ENCODE measurements at regions of chr14 and their contacts with region 1.

Region 1: GRCh38 chr14:104137297-104138097 is 890 bp upstream of the KIF26A start:
- DNase-seq: peak; percentile 79
- ATAC-seq: peak; percentile 42
- H3K4me3 Mint-ChIP-seq: peak overlapping the region; percentile 71
- H3K27ac Mint-ChIP-seq: no peak overlapping the region
- H3K4me1 Mint-ChIP-seq: peaks cover 25% of the 10 kb centered on the region
- H3K27me3 Mint-ChIP-seq: peaks cover 28% of the 10 kb centered on the region
- CTCF ChIP-seq: peak; percentile 82

Region 2: GRCh38 chr14:103688906-103689902 is 448.3 kb before region 1 on chr14:
- CTCF ChIA-PET with region 1: no interaction called
- POLR2A ChIA-PET with region 1: no interaction called
- DNase-seq: no peak
- ATAC-seq: no peak
- H3K4me3 Mint-ChIP-seq: no peak overlapping the region
- H3K27ac Mint-ChIP-seq: peak overlapping the region; percentile 89
- H3K4me1 Mint-ChIP-seq: no peaks in the 10 kb centered on the region; the same call in 1 of the 2 replicates
- H3K27me3 Mint-ChIP-seq: no peaks in the 10 kb centered on the region
- CTCF ChIP-seq: no peak

Region 3: DNA sequence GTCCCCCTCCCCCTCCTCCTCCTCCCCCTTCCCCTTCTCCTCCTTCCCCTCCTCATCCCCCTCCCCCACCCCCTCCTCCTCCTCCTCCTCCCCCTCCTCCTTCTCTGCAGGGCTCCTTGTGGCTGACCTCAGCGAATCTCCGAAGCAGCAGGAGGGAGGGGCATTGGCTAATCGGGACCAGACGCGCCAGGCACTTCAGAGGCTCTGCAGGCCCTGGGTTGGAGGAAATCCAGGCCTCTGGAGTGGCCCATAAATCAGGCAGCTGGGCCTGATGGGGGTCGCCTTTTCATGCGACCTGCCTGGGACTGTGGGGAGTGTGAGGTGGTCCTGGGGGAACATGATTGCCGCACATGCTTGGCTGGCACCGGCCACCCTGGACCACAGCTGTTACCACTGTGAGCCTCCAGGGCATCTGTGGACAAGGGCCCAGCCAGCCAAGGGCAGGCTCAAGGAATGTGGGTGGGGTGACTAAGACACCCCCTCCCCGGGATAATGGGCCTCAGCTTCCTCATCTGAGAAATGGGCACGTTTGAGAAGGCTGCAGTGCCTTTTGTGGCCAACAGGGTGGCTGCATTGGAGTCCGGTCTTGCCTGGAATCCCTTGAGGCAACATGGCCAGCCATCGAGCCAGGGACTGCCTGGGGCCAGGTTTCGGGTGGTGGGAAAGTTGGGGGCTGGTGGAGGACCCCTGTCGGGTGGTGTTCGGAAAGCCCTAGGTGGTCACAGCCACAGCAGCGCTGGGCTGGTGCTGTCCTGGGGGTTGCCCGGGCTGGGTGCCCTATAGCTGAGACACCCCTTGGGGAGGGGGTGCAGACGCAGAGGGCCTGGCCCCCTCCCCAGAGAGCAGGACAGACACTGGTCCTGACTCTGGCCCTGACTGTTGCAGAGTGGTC is 12.9 kb after region 1 on chr14:
- CTCF ChIA-PET with region 1: interaction called, 16 read pairs
- POLR2A ChIA-PET with region 1: no interaction called
- DNase-seq: peak; percentile 71
- ATAC-seq: peak; percentile 43
- H3K4me3 Mint-ChIP-seq: no peak overlapping the region
- H3K27ac Mint-ChIP-seq: peak overlapping the region; percentile 84; the same call in 1 of the 2 replicates
- H3K4me1 Mint-ChIP-seq: peaks cover 35% of the 10 kb centered on the region
- H3K27me3 Mint-ChIP-seq: no peaks in the 10 kb centered on the region
- CTCF ChIP-seq: peak; percentile 57; the same call in 1 of the 2 replicates

Region 4: DNA sequence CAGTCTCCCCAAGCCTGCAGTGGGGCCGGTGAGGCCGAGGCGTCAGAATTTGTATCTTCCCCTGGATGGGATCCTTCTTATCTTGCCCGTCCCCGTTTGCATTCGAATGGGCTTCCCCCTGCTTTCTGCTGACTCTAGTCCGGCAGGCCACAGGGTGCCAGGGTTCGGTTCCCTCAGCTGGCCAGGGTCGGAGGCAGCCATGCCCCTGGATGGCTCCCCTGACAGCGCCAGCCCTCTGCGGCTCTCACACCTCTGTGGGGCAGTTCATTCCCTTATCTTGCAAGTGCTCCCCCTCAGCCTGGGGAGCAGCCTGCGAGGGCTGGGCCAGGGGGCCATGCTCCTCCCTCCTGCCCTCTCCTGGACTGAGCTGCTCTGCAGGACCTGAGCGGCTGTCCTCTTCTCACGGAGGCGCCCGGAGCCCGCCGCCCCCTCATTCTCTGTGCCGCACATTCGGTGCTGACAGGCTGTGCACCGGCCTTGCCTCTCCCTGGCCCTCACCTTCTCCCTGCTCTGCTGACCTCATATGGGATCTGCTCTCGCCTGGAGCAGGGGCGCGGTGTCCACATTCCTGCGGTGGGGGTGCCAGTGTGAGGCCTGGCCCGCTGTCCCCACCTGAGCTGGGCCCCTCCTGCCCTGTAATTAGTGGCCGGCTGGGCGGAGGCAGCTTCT is 33.7 kb after region 1 on chr14:
- CTCF ChIA-PET with region 1: interaction called, 11 read pairs
- POLR2A ChIA-PET with region 1: no interaction called
- DNase-seq: peak; percentile 79
- ATAC-seq: peak; percentile 71
- H3K4me3 Mint-ChIP-seq: peak overlapping the region; percentile 47
- H3K27ac Mint-ChIP-seq: peak overlapping the region; percentile 89
- H3K4me1 Mint-ChIP-seq: peaks cover 26% of the 10 kb centered on the region
- H3K27me3 Mint-ChIP-seq: no peaks in the 10 kb centered on the region
- CTCF ChIP-seq: no peak

Region 5: DNA sequence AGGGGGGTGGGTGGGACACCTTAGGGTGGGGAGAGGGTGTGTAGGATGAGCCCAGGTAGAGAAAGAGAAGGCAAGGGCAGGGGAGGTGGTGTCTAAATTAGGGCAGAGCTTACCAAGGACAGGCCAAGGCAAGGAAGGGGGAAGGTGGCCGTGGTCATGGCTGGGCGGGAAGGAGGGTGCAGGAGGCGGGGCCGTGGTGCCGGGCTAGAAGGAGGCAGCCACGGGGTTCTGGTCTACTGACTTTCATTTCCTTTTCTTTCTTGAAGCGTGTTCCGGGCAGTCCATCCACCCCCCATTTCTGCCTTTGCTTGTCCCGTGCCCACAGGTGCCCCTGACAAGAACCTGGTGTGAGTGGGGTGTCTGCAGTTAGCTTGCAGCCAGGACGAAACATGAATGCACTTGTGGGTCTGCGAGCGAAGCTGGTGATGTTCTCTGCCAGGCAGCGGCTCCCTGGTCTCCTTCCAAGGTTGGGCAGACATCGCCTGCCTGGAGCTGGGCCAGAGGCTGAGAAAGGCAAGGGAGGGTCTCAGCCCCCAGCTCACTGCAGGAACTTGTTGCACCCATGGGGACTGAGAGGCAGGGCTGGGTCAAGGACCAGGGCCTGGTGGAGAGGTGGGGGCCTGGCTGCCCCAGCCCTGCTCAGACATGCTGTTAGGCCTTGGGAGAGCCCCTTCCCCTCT is 59.1 kb after region 1 on chr14:
- CTCF ChIA-PET with region 1: interaction called, 10 read pairs
- POLR2A ChIA-PET with region 1: no interaction called
- DNase-seq: no peak
- ATAC-seq: no peak
- H3K4me3 Mint-ChIP-seq: no peak overlapping the region
- H3K27ac Mint-ChIP-seq: no peak overlapping the region
- H3K4me1 Mint-ChIP-seq: peaks cover 5% of the 10 kb centered on the region; the same call in 1 of the 2 replicates
- H3K27me3 Mint-ChIP-seq: no peaks in the 10 kb centered on the region
- CTCF ChIP-seq: no peak

Region 6: GRCh38 chr14:104224506-104225277 is 87.2 kb after region 1 on chr14:
- CTCF ChIA-PET with region 1: interaction called, 18 read pairs
- POLR2A ChIA-PET with region 1: no interaction called
- DNase-seq: peak; percentile 77
- ATAC-seq: peak; percentile 42
- H3K4me3 Mint-ChIP-seq: no peak overlapping the region
- H3K27ac Mint-ChIP-seq: peak overlapping the region; percentile 94
- H3K4me1 Mint-ChIP-seq: peaks cover 25% of the 10 kb centered on the region
- H3K27me3 Mint-ChIP-seq: no peaks in the 10 kb centered on the region
- CTCF ChIP-seq: peak; percentile 49

Region 7: GRCh38 chr14:104322531-104323366 is 185.3 kb after region 1 on chr14:
- CTCF ChIA-PET with region 1: no interaction called
- POLR2A ChIA-PET with region 1: no interaction called
- DNase-seq: no peak
- ATAC-seq: no peak
- H3K4me3 Mint-ChIP-seq: no peak overlapping the region
- H3K27ac Mint-ChIP-seq: no peak overlapping the region
- H3K4me1 Mint-ChIP-seq: no peaks in the 10 kb centered on the region
- H3K27me3 Mint-ChIP-seq: no peaks in the 10 kb centered on the region
- CTCF ChIP-seq: no peak

Region 8: DNA sequence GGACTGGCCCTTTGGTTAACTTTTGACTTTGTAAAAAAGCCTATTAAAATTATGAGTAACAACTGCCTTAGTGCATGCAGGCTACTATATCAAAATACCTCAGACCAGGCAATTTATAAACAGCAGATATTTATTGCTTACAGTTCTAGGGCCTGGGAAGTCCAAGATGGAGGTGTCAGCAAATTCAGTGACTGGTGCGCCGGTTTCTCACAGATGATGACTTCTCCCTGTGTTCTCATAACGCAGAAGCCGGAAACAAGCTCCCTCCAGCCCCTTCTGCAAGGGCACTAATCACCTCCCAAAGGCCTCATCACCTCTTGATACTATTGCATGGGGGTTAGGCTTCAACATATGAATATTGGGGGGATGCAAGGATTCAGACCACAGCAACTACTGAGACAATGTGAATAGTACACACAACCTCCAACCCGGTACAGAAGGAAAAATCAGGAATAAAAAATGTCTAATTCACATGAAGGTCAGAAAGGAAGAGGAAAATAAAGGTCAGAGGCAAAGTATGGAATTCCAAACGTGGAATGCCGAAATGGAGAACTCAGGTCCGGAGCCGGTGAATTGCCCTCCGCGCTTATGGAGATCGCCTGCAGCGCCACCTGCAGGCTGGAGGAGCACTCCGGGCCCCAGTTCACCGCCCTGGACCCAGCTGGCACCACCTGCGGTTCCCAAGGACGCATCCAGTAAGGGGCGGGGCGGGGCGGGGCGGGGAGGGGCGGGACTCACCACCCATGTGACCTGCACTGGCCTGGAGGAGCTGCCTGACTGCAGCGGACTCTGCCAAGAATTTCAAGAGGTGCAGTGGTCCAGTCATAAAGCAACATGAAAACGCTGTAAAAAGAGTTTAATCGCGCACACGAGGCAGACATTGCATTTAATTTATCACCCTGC is 204.3 kb after region 1 on chr14:
- CTCF ChIA-PET with region 1: interaction called, 11 read pairs
- POLR2A ChIA-PET with region 1: no interaction called
- DNase-seq: peak; percentile 86
- ATAC-seq: peak; percentile 92
- H3K4me3 Mint-ChIP-seq: peak overlapping the region; percentile 39
- H3K27ac Mint-ChIP-seq: no peak overlapping the region
- H3K4me1 Mint-ChIP-seq: peaks cover 9% of the 10 kb centered on the region
- H3K27me3 Mint-ChIP-seq: peaks cover 23% of the 10 kb centered on the region
- CTCF ChIP-seq: peak; percentile 76